Caco-2 (cell line): ENCODE measurements at regions of chr13 and their contacts with region 1.

Region 1: DNA sequence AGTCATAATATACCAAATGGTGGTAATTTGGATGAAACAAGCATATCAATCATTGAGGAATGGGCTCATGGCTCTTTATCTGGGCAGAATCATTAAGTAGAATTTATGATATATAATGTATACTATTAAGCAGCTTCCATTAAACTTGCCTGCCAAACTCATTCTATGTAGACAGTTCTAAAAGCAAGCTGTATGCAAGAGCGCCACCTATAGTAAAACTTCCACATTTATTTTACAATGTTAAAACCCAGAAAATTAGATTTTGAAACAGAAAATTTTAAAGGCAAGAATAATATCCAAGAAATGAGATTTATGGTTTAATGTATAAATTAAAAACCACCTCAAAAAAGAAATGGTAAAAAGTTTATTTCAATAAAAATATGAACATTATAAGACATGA is 161.5 kb downstream of the MZT1 start:
- DNase-seq: peak in 1 of 2 experiments; percentile 29
- H3K4me3 ChIP-seq: no peak overlapping the region
- H3K4me3 Mint-ChIP-seq: no peak overlapping the region
- H3K27ac Mint-ChIP-seq: no peak overlapping the region
- H3K4me1 ChIP-seq: no peaks in the 10 kb centered on the region
- H3K4me1 Mint-ChIP-seq: no peaks in the 10 kb centered on the region
- H3K27me3 ChIP-seq: no peaks in the 10 kb centered on the region
- H3K27me3 Mint-ChIP-seq: peaks cover 10% of the 10 kb centered on the region
- CTCF ChIP-seq: peak; percentile 55 to 66

Region 2: DNA sequence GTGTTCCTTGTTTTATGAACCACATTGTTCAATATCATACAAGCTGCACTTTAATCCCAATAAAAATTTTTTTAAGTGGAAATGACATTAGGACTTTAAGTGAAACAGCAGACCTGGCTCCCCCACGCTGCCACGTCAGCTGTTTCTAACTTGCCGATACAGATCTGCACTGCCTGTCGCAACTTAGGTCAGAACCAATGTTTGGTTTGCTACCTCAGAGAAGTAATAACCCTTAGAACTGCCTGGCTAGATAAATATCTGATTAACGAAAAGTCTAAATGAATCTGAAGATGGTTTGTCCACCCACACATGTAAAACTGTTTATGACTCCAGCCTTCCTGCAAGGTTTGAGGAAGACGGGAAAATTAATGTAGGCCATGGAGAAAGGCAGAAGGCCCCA is 371.3 kb before region 1 on chr13:
- CTCF ChIA-PET with region 1: no interaction called
- POLR2A ChIA-PET with region 1: no interaction called
- intact Hi-C with region 1: loop called (anchors 10 kb)
- DNase-seq: no peak
- H3K4me3 ChIP-seq: no peak overlapping the region
- H3K4me3 Mint-ChIP-seq: no peak overlapping the region
- H3K27ac Mint-ChIP-seq: no peak overlapping the region
- H3K4me1 ChIP-seq: no peaks in the 10 kb centered on the region
- H3K4me1 Mint-ChIP-seq: no peaks in the 10 kb centered on the region
- H3K27me3 ChIP-seq: no peaks in the 10 kb centered on the region
- H3K27me3 Mint-ChIP-seq: peaks cover 3% of the 10 kb centered on the region
- CTCF ChIP-seq: no peak

Region 3: GRCh38 chr13:72221276-72221962 is 344.5 kb before region 1 on chr13:
- CTCF ChIA-PET with region 1: no interaction called
- POLR2A ChIA-PET with region 1: no interaction called
- intact Hi-C with region 1: loop called (anchors 1 kb)
- DNase-seq: peak; percentile 66 to 69
- H3K4me3 ChIP-seq: no peak overlapping the region
- H3K4me3 Mint-ChIP-seq: no peak overlapping the region
- H3K27ac Mint-ChIP-seq: no peak overlapping the region
- H3K4me1 ChIP-seq: no peaks in the 10 kb centered on the region
- H3K4me1 Mint-ChIP-seq: no peaks in the 10 kb centered on the region
- H3K27me3 ChIP-seq: no peaks in the 10 kb centered on the region
- H3K27me3 Mint-ChIP-seq: no peaks in the 10 kb centered on the region
- CTCF ChIP-seq: peak; percentile 82 to 91

Region 4: DNA sequence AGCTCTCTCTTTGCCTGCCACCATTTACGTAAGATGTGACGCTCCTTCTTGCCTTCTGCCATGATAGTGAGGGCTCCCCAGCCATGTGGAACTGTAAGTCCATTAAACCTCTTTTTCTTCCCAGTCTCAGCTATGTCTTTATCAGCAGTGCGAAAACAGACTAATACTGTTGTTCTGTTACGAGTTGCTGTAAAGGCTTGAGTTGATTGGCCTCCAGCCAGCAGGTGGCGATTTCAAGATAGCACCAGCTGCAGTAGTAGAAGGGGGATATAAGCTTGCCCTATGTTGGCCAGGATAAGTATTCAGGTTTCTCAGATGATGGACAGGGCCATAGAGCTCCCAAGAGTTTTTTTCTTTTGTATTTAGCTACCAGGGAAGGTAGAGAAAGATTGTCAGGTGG is 224.0 kb before region 1 on chr13:
- CTCF ChIA-PET with region 1: interaction called, 5 read pairs
- POLR2A ChIA-PET with region 1: no interaction called
- intact Hi-C with region 1: loop called (anchors 1 kb)
- DNase-seq: peak in 1 of 2 experiments; percentile 28
- H3K4me3 ChIP-seq: no peak overlapping the region
- H3K4me3 Mint-ChIP-seq: no peak overlapping the region
- H3K27ac Mint-ChIP-seq: no peak overlapping the region
- H3K4me1 ChIP-seq: no peaks in the 10 kb centered on the region
- H3K4me1 Mint-ChIP-seq: no peaks in the 10 kb centered on the region
- H3K27me3 ChIP-seq: no peaks in the 10 kb centered on the region
- H3K27me3 Mint-ChIP-seq: peaks cover 12% of the 10 kb centered on the region
- CTCF ChIP-seq: peak; percentile 19 to 39

Region 5: GRCh38 chr13:72437458-72437857 is 128.4 kb before region 1 on chr13:
- CTCF ChIA-PET with region 1: no interaction called
- POLR2A ChIA-PET with region 1: no interaction called
- intact Hi-C with region 1: loop called (anchors 10 kb)
- DNase-seq: no peak
- H3K4me3 ChIP-seq: no peak overlapping the region
- H3K4me3 Mint-ChIP-seq: no peak overlapping the region
- H3K27ac Mint-ChIP-seq: no peak overlapping the region
- H3K4me1 ChIP-seq: no peaks in the 10 kb centered on the region
- H3K4me1 Mint-ChIP-seq: no peaks in the 10 kb centered on the region
- H3K27me3 ChIP-seq: no peaks in the 10 kb centered on the region
- H3K27me3 Mint-ChIP-seq: peaks cover 4% of the 10 kb centered on the region
- CTCF ChIP-seq: no peak

Region 6: DNA sequence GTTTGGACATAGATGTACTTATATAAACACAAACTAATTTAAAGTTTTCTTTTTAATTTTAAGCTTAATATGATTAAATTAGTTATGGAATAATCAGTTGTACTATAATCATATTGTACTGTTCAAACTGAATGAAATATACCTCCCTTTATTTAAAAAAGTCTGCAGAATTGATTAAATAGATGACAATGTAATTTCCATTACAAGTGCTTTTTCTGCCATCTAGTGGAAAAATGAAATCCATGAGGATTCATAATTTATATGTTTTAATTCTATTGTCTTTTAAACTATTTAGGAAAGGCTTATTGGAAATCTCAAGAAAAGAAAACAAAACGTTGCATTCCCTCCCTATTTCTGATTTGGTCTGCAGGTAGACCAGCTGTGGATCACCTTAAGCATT is 130.7 kb after region 1 on chr13:
- CTCF ChIA-PET with region 1: no interaction called
- POLR2A ChIA-PET with region 1: no interaction called
- intact Hi-C with region 1: loop called (anchors 5 kb)
- DNase-seq: no peak
- H3K4me3 ChIP-seq: no peak overlapping the region
- H3K4me3 Mint-ChIP-seq: no peak overlapping the region
- H3K27ac Mint-ChIP-seq: no peak overlapping the region
- H3K4me1 ChIP-seq: no peaks in the 10 kb centered on the region
- H3K4me1 Mint-ChIP-seq: no peaks in the 10 kb centered on the region
- H3K27me3 ChIP-seq: no peaks in the 10 kb centered on the region
- H3K27me3 Mint-ChIP-seq: no peaks in the 10 kb centered on the region
- CTCF ChIP-seq: peak in 1 of 2 experiments; percentile 58